ENCODE measurements at regions of chr14 and their contacts with region 1.

Region 1: DNA sequence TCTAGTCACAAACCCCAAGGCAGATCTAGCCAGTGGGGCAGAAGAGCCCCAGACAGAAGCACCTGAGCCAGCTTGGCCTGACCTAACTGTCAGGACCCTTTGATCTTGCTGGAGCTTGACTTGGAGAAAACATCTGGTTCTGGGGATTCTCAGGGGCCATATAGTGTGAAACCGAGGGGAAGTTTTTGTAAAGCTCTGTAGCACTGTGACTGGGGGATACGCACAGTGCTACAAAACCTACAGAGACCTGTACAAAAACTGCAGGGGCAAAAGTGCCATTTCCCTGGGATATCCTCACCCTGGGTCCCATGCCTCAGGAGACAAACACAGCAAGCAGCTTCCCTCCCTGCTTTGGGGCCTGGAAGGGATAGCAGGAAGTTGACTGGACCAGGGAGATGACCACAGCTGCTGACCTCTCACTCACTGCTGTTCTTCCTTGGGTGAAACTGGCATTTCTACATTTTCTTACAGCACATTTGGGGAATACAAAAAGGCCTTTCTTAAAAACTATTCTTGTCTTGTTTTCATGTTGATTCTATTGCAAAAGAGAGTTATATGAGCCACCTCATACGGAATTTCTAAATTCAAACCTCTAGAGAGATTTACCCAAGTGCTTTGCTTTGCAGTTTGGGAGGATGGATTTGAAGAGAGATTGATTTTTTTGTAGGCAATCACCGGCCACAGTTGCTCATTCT is 140.0 kb downstream of the DAD1 start:
- DNase-seq: peak; percentile 73
- H3K4me3 ChIP-seq: peak overlapping the region; percentile 1
- H3K27ac ChIP-seq: peak overlapping the region; percentile 81
- H3K4me1 ChIP-seq: peaks cover 48% of the 10 kb centered on the region
- CTCF ChIP-seq: no peak

Region 2: DNA sequence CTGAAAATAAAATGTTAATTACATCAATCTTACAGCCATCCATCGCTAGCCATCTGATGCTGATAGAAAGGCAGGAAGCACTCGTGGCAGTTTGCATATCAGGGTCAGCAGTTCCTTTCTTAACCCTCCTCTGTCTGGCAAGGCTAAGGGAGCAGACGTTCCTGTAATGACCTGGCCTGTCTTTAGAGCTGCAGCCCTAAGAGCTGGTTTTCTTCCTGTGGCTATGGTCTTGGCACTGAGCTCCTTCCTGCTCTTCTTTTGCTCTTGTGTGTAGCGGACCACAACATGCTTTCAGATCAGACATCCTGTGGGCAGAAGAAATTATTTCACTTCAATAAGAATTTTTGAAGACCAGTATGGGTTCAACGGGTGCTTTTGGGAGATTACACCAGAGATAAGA is 30.4 kb before region 1 on chr14:
- CTCF ChIA-PET with region 1: interaction called, 4 read pairs
- POLR2A ChIA-PET with region 1: interaction called, 21 read pairs
- intact Hi-C with region 1: no loop called
- DNase-seq: peak; percentile 74
- H3K4me3 ChIP-seq: peak overlapping the region; percentile 26
- H3K27ac ChIP-seq: peak overlapping the region; percentile 78
- H3K4me1 ChIP-seq: peaks cover 61% of the 10 kb centered on the region
- CTCF ChIP-seq: no peak

Region 3: GRCh38 chr14:22464422-22465142 is 15.5 kb after region 1 on chr14:
- CTCF ChIA-PET with region 1: interaction called, 4 read pairs
- POLR2A ChIA-PET with region 1: interaction called, 73 read pairs
- intact Hi-C with region 1: loop called (anchors 1 kb)
- DNase-seq: no peak
- H3K4me3 ChIP-seq: no peak overlapping the region
- H3K27ac ChIP-seq: no peak overlapping the region
- H3K4me1 ChIP-seq: peaks cover 73% of the 10 kb centered on the region
- CTCF ChIP-seq: no peak

Region 4: DNA sequence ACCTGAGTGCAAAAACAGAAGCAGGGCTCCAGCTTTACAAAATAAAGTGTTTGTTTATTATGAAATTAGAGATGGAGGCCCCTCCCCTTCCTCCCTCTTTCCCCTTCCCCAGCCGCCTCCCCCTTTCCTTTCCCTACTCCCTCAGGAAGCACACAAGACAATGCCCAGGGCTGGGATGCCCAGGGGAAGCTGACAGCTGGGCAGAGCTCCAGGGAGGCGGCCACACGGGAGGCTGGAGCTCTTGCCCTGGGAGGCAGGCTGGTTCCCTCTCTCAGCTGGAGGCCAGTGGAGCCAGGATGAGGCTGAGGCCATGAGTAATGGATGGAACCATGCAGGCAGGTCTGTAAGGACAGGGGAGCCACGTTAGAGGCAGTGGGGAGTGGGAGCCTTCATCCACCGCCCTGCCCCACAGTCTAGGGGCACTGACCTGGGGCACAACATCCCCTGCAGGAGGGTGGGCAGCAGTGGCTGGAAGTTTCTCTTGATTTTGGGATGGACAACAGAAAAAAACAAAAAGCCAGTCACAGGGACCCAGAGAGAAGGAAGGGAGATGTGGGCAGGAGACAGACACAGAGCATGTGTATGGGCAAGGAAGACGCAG is 598.1 kb after region 1 on chr14:
- CTCF ChIA-PET with region 1: no interaction called
- POLR2A ChIA-PET with region 1: no interaction called
- intact Hi-C with region 1: no loop called
- DNase-seq: no peak
- H3K4me3 ChIP-seq: no peak overlapping the region
- H3K27ac ChIP-seq: no peak overlapping the region
- H3K4me1 ChIP-seq: no peaks in the 10 kb centered on the region
- CTCF ChIP-seq: no peak

Measured in OCI-LY7 (cell line).